Activated naive CD4-positive, alpha-beta T cell treated with anti-CD3 and anti-CD28 coated beads, Interleukin-2, amount 10 ng/mL, durations not matched to agents 7 days and 5 days (primary cell): ENCODE measurements at regions of chr17 and their contacts with region 1.

Region 1: GRCh38 chr17:66567234-66568170 is 265.1 kb downstream of the PRKCA start:
- DNase-seq: peak; percentile 86
- H3K4me3 Mint-ChIP-seq: no peak overlapping the region
- H3K27ac Mint-ChIP-seq: no peak overlapping the region
- H3K4me1 Mint-ChIP-seq: peaks cover 17% of the 10 kb centered on the region
- H3K27me3 Mint-ChIP-seq: no peaks in the 10 kb centered on the region

Region 2: DNA sequence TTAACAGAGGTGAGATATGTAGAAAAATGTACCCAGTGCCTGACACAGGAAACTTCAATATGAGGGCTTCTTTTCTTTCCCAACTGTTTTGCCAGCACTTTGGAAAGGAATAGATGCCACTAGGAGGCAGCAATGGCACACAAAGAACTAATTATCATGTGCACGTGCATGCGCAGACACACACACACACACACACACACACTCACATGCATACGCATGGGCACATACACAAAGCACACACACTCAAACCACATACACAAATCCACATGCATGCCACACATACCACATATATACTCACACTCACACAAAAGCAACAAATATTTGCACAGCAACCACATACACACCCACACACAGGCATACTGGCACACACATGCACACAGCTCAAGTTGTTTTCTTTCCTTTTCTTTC is 366.8 kb before region 1 on chr17:
- CTCF ChIA-PET with region 1: interaction called, 15 read pairs
- DNase-seq: peak; percentile 64
- H3K4me3 Mint-ChIP-seq: no peak overlapping the region
- H3K27ac Mint-ChIP-seq: no peak overlapping the region
- H3K4me1 Mint-ChIP-seq: peaks cover 19% of the 10 kb centered on the region
- H3K27me3 Mint-ChIP-seq: peaks cover 4% of the 10 kb centered on the region

Region 3: DNA sequence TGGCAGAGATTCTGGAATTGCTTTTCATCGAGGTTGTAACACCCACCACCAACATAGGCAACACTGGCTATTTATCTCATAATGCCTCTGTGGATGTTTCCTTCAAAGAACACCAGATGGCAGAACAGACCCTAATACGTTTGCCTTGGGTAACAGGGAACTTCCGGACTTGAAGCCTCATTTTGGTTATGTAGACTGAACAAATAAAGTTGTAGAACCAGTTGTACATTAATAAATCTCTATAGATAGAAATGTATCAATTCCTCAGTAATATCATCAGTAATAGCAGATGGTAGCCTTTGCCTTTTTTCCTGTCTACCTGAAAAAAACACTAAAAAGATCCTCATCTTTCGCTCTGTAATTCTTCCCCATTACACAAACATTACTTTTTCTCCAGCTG is 312.4 kb before region 1 on chr17:
- CTCF ChIA-PET with region 1: interaction called, 18 read pairs
- DNase-seq: peak; percentile 43
- H3K4me3 Mint-ChIP-seq: no peak overlapping the region
- H3K27ac Mint-ChIP-seq: no peak overlapping the region
- H3K4me1 Mint-ChIP-seq: peaks cover 15% of the 10 kb centered on the region
- H3K27me3 Mint-ChIP-seq: no peaks in the 10 kb centered on the region

Region 4: DNA sequence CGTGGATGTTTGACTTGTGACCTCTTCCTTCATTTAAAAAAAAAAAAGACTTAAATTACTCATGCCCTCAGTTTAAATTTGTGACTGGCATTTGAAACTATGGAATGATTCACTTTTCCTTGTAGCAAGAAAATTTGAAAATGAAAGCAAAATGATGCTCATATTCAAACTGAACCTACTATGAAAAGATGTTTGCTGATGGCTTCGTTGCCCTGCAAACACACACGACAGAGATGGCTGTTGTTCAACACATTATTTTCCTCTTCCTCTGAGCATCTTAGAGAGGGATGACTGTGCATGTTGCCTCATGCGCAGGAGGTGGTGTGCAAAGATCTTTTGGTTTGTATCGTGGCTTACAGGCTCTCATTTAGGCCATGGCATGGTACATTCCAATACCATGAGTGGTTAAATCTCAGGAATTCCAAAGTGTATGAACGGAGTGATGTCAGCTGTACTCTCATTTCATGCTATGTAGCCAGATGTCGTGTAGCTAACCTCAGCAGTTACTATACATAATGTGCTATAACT is 100.6 kb before region 1 on chr17:
- CTCF ChIA-PET with region 1: interaction called, 10 read pairs
- DNase-seq: peak; percentile 60
- H3K4me3 Mint-ChIP-seq: peak overlapping the region; percentile 33
- H3K27ac Mint-ChIP-seq: peak overlapping the region; percentile 85
- H3K4me1 Mint-ChIP-seq: peaks cover 58% of the 10 kb centered on the region
- H3K27me3 Mint-ChIP-seq: no peaks in the 10 kb centered on the region

Region 5: GRCh38 chr17:66493991-66494803 is 73.3 kb before region 1 on chr17:
- CTCF ChIA-PET with region 1: no interaction called
- DNase-seq: no peak
- H3K4me3 Mint-ChIP-seq: no peak overlapping the region
- H3K27ac Mint-ChIP-seq: peak overlapping the region; percentile 43
- H3K4me1 Mint-ChIP-seq: peaks cover 35% of the 10 kb centered on the region
- H3K27me3 Mint-ChIP-seq: no peaks in the 10 kb centered on the region

Region 6: GRCh38 chr17:66552371-66552770 is 15.1 kb before region 1 on chr17:
- CTCF ChIA-PET with region 1: interaction called, 17 read pairs
- DNase-seq: no peak
- H3K4me3 Mint-ChIP-seq: no peak overlapping the region
- H3K27ac Mint-ChIP-seq: no peak overlapping the region
- H3K4me1 Mint-ChIP-seq: peaks cover 31% of the 10 kb centered on the region
- H3K27me3 Mint-ChIP-seq: no peaks in the 10 kb centered on the region

Region 7: DNA sequence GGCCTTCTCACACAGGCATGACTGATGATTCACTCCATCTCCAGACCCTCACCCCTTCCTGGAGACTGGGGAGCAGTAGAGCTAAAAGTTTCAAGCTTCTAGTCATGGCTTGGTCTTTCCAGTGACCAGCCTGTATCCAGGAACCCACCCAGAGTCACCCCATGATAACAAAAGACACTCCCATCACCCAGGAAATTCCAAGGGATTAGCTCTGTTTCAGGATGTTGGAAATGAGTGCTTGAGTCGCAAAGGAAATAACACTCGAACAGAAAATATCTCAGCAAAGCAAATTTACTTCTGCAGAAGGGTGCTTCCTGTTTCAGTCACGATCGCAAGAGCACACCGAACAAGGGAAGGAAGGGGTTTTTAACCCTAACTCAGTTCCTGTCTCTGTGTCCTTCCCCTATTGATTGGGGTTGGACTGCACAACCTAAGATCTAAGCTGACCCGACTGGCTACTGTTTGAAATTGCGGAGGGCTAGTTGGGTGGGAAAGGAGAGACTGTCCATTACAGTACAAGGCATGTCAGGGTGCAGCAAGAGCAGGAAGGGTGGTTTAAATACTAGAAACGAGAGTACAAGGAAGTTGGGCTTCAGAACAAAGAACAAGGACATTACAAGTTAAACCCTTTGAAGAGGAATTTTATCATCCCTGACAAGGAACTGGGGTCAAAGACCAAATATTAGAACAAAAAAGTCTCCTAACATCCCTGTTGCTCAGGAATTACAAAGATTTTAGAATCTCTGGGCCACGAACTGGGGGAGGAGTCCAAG is 43.0 kb after region 1 on chr17:
- CTCF ChIA-PET with region 1: no interaction called
- DNase-seq: no peak
- H3K4me3 Mint-ChIP-seq: no peak overlapping the region
- H3K27ac Mint-ChIP-seq: no peak overlapping the region
- H3K4me1 Mint-ChIP-seq: peaks cover 26% of the 10 kb centered on the region
- H3K27me3 Mint-ChIP-seq: no peaks in the 10 kb centered on the region

Region 8: GRCh38 chr17:66737524-66737923 is 170.0 kb after region 1 on chr17:
- CTCF ChIA-PET with region 1: no interaction called
- DNase-seq: no peak
- H3K4me3 Mint-ChIP-seq: no peak overlapping the region
- H3K27ac Mint-ChIP-seq: no peak overlapping the region
- H3K4me1 Mint-ChIP-seq: peaks cover 2% of the 10 kb centered on the region
- H3K27me3 Mint-ChIP-seq: no peaks in the 10 kb centered on the region